ENCODE measurements at regions of chr10 and their contacts with region 1.

Region 1: GRCh38 chr10:71138166-71138830 is 74.1 kb upstream of the UNC5B start:
- DNase-seq: peak; percentile 31 to 69 (median 67)
- ATAC-seq: peak in 1 of 2 donors; percentile 8
- H3K4me3 ChIP-seq: no peak overlapping the region
- H3K27ac ChIP-seq: no peak overlapping the region
- H3K4me1 ChIP-seq: no peaks in the 10 kb centered on the region
- H3K27me3 ChIP-seq: no peaks in the 10 kb centered on the region

Region 2: GRCh38 chr10:71015674-71016073 is 122.6 kb before region 1 on chr10:
- intact Hi-C with region 1: loop called in 1 of 4 experiments (anchors 10 kb)
- DNase-seq: no peak
- ATAC-seq: no peak
- H3K4me3 ChIP-seq: no peak overlapping the region
- H3K27ac ChIP-seq: no peak overlapping the region
- H3K4me1 ChIP-seq: peaks cover 2% of the 10 kb centered on the region
- H3K27me3 ChIP-seq: no peaks in the 10 kb centered on the region